ENCODE measurements at regions of chr3 and their contacts with region 1.

Region 1: DNA sequence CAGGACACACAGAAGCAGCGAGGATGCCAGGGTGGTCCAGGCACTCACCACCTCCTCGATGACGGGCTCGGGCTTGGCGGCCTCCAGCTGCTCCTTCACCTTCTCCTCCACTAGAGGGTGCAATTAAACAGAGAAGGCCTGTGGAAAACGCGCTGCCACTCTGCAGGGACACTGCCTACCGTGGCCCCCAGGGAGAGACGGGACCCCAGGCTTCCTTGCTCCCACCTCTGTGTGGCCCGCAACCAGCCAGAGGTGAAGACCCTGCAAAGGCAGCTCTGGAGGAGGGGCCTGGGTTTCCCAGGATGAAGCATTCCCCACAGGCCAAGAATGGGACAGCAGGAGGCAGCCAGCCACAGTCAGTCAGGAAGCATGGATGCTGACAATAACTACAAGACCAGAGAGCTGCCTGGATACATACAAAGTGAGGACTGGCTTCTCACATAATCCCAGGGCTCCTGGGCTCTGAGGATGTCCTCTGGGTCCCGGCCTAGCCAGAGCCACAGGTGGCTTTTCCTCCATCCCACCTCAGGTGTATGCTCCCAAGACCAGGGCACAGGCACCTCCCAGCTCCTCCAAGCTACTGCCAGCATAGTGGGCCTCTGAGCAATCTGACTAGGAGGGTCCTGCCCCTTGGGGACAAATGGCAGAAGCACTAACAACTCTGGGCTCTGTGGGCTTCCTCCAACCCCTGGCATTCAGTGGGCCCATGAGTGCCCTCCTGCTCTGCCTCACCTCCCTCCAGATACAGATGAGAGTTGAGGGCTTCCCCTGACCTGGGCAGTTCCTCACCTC is 46.2 kb downstream of the PTH1R start:
- DNase-seq: peak; percentile 81

Region 2: DNA sequence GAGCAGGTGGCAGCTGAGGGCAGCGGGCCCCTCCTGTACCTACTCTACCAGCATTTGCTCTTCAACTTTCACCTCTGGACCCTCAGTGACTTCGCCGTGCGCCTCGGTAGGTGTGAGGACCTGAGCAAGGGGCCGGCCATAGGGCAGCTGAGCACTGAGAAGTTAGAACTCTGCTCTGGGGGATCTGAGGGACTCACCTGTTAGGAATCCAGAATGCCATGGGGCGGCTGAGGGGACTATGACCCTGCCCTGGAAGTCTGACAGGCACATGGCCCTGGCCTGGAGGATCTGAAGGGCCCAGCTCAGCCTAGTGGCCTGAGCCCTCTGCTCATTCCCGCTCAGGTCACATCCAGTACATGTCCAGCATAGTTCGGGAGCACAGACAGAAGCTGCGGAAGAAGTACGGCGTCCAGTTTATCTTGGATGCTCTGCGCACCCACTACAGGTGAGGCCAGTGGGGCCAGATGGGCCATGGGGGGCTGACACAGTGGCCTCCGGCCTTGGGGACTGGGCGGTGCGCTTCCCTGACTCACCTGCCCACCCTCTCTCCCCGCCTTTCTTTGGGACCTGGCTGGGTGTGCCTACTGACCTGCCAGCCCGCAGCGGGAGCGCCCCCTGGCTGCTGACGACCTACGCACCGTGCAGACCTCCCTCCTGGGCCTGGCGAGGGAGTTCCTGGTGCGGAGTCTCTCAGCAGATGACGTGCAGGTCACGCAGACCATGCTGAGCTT is 74.5 kb after region 1 on chr3:
- intact Hi-C with region 1: loop called in 1 of 2 experiments (anchors 5 kb)
- DNase-seq: peak; percentile 92

Region 3: DNA sequence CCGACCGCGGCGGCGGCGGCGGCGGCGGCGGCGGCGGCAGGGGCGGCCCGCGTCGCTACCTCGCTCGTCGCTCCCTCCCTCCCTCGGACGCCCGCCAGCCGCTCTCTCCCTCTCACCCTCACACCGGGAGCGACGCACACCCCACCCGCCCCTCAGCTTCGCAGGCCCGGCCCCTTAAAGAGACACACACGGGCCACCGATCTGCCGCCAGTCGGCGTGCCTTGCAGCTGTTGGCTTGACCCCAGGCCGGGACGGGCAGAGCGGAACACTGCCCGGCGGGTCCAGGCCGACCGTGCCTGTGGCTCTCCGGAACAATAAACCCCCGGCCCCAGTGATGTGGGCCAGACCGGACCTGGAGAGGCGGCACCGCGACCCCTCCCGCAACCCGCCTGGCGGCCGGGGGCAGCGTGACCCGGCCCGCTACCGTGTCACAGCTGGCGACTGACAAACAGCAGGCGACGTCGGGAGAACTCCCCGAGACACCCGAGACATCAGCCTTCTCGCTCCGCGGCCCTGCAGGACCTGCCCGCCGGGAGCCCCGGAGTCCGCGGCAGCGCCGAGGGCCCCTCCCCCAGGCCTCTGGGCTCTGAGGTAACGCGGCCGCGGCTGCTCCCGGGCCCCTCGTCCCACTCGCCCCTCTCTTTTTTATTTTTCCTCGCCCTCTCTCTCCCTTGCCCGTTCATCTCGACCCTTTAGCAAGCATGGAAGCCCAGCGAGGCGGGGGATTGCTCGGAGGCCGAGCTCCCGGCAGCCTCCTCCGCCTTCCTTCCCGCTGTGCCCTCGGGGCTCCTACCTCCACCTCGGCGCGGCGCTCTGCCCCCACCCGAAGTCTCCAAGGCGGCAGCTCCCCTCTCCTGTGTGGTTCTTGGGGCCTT is 240.5 kb after region 1 on chr3 and contains the start of gene SETD2:
- intact Hi-C with region 1: loop called in 1 of 2 experiments (anchors 10 kb)
- DNase-seq: peak; percentile 97
- total RNA-seq, gene SETD2: 38.3 to 49.3 TPM

Measured in posterior vena cava (tissue), 2 donors.